ENCODE measurements at regions of chr2 and their contacts with region 1.

Region 1: GRCh38 chr2:70948337-70949003 is 12.8 kb downstream of the ATP6V1B1 start:
- DNase-seq: peak; percentile 87
- H3K4me3 ChIP-seq: peak overlapping the region; percentile 27 to 54
- H3K27ac ChIP-seq: peak overlapping the region in 1 of 2 experiments; percentile 44; a peak in 2 of 4 replicates
- H3K4me1 ChIP-seq: peaks cover 5 to 8% of the 10 kb centered on the region in 2 experiments; a peak in 2 of 4 replicates
- H3K27me3 ChIP-seq: no peaks in the 10 kb centered on the region
- CTCF ChIP-seq: peak; percentile 81
- EP300 ChIP-seq: no peak
- RAD21 ChIP-seq: peak; percentile 56

Region 2: DNA sequence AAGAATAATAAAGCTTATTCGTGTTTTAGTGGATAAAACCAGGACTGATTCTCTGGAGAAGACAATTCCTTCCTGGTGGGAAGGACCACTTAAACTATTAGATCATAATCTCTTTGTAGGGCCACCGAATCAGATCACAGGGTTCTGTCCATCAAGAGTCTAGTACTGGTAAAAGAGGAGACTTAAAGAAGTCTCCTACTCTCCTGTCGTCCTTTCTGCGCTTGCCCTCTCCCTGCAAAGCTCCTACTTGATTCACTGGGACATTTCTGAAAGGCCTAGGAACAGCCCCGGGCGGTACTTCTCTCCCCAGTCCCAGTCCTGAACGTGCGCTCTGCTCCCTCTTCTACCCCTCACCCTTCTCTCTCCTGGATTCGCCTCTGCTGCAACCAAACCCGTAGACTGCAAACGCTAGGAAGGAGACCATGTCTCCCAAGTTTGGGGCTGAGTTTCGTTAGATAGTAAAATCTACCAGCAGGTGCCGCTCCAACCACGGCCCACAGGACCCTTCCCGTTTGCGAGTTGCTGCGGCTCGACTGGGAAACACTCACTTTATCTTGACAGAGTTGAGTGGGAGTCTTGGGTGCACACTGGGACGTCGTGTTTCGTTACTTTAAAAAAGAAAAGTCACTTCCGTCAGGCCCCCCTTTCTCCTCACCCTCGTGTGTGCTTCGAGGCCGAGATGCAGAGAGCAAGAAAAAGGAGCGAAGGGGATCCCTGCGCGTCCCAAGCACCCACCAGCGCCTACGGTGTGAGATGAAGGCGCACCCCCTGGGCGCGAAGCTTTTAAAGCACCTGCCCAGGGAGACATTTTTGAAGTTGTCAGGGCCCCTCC is 158.9 kb before region 1 on chr2:
- CTCF ChIA-PET with region 1: interaction called, 56 read pairs
- POLR2A ChIA-PET with region 1: no interaction called
- DNase-seq: peak; percentile 81
- H3K4me3 ChIP-seq: peak overlapping the region; percentile 26 to 55
- H3K27ac ChIP-seq: no peak overlapping the region
- H3K4me1 ChIP-seq: peaks cover 0 to 9% of the 10 kb centered on the region in 2 experiments; a peak in 1 of 4 replicates
- H3K27me3 ChIP-seq: peaks cover 44% of the 10 kb centered on the region
- CTCF ChIP-seq: peak; percentile 69
- EP300 ChIP-seq: no peak
- RAD21 ChIP-seq: peak; percentile 83

Region 3: DNA sequence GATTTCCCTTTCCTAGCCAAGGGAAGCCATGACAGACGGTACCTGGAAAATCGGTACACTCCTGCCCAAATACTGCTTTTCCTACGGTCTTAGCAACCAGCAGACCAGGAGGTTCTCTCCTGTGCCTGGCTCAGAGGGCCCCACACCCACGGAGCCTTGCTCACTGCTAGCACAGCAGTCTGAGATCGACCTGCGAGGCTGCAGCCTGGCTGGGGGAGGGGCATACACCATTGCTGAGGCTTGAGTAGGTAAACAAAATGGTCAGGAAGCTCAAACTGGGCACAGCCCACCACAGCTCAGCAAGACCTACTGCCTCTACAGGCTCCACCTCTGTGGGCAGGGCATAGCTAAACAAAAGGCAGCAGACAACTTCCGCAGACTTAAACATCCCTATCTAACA is 106.1 kb before region 1 on chr2:
- CTCF ChIA-PET with region 1: interaction called, 11 read pairs
- POLR2A ChIA-PET with region 1: no interaction called
- DNase-seq: no peak
- H3K4me3 ChIP-seq: no peak overlapping the region
- H3K27ac ChIP-seq: no peak overlapping the region
- H3K4me1 ChIP-seq: no peaks in the 10 kb centered on the region
- H3K27me3 ChIP-seq: no peaks in the 10 kb centered on the region; the same call in 1 of the 2 replicates
- CTCF ChIP-seq: no peak
- EP300 ChIP-seq: no peak
- RAD21 ChIP-seq: no peak

Region 4: DNA sequence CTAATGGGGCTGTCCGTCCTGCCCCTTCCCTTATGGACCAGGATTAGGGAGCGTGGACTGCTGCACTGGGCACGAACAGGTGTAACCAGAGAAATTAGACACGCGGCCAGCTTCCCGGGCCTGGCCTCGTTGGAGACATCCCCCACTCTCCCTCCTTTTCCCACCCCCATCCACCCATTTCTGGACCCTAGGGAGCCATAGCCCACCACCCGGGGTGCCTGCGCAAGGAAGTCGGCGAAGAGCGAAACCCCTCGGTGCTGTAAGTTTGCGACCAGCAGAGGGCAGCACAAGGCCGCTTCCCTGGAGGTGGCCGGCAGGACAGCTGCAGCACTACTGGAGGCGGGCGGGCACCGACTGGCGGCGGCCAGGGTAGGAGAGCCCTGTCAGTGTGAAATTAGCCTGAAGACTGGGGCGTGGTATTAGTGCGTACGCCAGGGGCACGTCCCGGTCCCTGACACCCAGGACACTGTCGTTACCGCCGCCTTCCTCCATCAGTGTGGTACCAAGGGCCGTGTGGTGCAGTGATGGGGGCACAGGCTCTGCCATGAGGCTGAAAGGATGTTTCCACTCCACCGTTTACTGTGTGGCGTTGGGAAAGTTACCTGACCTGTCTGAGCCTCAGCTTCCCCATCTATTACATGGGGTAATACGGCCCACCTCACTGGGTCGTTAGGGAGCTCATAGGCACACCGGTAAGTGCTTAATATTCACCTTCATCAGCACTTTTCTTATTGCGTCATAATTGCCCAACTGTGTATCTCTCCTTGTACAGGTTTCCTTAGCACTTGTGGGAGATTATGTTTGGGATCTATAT is 76.9 kb before region 1 on chr2:
- CTCF ChIA-PET with region 1: interaction called, 244 read pairs
- POLR2A ChIA-PET with region 1: interaction called, 5 read pairs
- DNase-seq: peak; percentile 90
- H3K4me3 ChIP-seq: peak overlapping the region; percentile 19 to 57; a peak in 2 of 4 replicates
- H3K27ac ChIP-seq: no peak overlapping the region
- H3K4me1 ChIP-seq: peaks cover 0 to 10% of the 10 kb centered on the region in 2 experiments; a peak in 1 of 4 replicates
- H3K27me3 ChIP-seq: no peaks in the 10 kb centered on the region
- CTCF ChIP-seq: peak; percentile 88
- EP300 ChIP-seq: no peak
- RAD21 ChIP-seq: peak; percentile 95

Region 5: DNA sequence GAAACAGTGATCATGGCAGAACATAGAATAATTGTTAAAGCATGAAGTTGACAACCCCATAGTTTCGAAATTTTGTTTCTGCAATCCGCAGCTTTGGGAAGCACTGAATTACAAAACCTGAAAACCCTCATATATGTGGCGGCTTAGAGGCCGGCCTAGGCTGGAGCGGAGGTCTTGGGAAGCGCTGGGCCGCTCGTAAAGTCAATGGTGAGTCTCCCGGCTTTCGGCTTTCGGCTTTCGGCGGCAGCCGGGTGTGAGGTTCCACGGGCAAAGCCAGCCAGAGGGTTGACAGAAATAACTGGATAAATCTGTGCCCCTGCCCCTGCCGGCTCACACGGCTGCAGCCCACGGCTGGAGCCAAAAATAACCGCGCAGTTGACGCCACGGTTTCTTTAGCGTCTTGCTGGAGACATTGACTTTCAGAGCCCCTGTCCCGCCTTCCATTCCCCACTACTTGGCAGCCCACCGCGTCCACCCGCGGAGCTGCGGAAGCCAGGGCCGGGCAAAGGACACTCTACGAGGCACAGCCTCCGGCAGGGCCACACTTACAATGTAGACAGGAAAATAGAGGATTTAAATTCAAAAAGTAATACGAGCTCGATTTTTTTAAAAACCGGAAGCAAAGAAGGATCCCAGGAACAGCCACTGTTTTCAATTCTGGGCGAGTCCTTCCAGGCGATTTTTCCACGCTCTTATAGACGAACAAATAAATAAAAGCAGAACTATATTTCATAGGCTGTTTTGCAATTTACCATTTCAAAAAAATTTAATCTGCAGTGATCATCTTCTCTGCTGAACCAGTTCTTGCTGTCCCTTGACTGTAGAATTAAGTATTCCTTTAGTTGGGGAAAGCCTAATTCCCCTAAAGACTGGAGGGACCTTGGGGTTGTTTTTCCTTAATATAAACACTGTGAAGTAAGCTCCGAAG is 41.1 kb before region 1 on chr2:
- CTCF ChIA-PET with region 1: interaction called, 10 read pairs
- POLR2A ChIA-PET with region 1: no interaction called
- DNase-seq: no peak
- H3K4me3 ChIP-seq: no peak overlapping the region
- H3K27ac ChIP-seq: no peak overlapping the region
- H3K4me1 ChIP-seq: peaks cover 0 to 4% of the 10 kb centered on the region in 2 experiments; a peak in 2 of 4 replicates
- H3K27me3 ChIP-seq: no peaks in the 10 kb centered on the region
- CTCF ChIP-seq: no peak
- EP300 ChIP-seq: no peak
- RAD21 ChIP-seq: no peak

Region 6: DNA sequence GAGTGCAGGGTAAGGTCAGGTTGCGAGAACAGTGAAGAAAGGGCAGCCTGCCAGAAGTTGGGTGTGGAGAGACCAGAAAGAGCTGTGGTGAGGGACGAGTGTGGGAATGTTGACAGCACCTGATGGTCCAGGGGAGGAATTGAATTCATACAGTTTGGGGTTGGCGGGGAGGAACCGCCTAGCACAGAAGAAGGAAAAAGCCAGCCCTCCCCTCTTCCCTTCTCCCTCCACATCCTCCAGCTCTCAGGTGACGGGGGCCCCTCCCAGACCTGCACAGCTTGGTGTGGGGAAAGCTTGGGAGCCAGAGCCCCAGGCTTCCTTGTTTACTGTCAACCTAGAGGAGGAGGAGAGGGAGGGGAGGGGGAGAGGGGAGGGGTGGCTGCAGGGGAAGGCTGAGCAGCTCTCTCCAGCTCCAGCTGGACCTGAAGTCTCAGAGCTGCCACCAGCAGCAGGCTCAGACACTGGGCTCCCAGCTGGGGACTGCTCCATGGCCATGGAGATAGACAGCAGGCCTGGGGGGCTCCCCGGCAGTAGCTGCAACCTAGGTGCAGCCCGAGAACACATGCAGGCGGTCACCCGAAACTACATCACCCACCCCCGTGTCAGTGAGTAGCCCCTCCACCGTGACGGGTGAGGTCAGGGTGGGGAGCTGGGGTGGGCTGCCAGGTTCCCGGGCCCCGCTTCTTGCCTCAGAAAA is 12.9 kb before region 1 on chr2 and contains the start of gene ATP6V1B1:
- CTCF ChIA-PET with region 1: interaction called, 79 read pairs
- POLR2A ChIA-PET with region 1: no interaction called
- DNase-seq: no peak
- H3K4me3 ChIP-seq: no peak within 1 kb of the TSS
- H3K27ac ChIP-seq: no peak within 1 kb of the TSS
- H3K4me1 ChIP-seq: peaks cover 0 to 5% of the 10 kb centered on the region in 2 experiments; a peak in 1 of 4 replicates
- H3K27me3 ChIP-seq: no peaks in the 10 kb centered on the region
- CTCF ChIP-seq: no peak
- EP300 ChIP-seq: no peak
- RAD21 ChIP-seq: no peak
- polyA plus RNA-seq, gene ATP6V1B1: 4.9 and 6.1 TPM in 2 replicates